CD4-positive, alpha-beta T cell (primary cell): ENCODE measurements at regions of chr4 and their contacts with region 1.

Region 1: GRCh38 chr4:6986781-6987587 is 56.2 kb upstream of the TADA2B start:
- DNase-seq: peak; percentile 88 to 98 (median 92)
- ATAC-seq: peak; percentile 90
- H3K4me3 ChIP-seq: peak overlapping the region; percentile 88
- H3K4me3 Mint-ChIP-seq: peak overlapping the region; percentile 97
- H3K27ac ChIP-seq: peak overlapping the region; percentile 78 to 93
- H3K27ac Mint-ChIP-seq: peak overlapping the region; percentile 95
- H3K4me1 ChIP-seq: peaks cover 64% of the 10 kb centered on the region
- H3K4me1 Mint-ChIP-seq: peaks cover 67% of the 10 kb centered on the region
- H3K27me3 ChIP-seq: no peaks in the 10 kb centered on the region
- H3K27me3 Mint-ChIP-seq: no peaks in the 10 kb centered on the region
- CTCF ChIP-seq: no peak

Region 2: GRCh38 chr4:6716018-6716911 is 270.7 kb before region 1 on chr4 and contains the start of gene BLOC1S4:
- CTCF ChIA-PET with region 1: no interaction called
- POLR2A ChIA-PET with region 1: interaction called, 6 read pairs
- intact Hi-C with region 1: loop called in 1 of 2 experiments (anchors 5 kb)
- DNase-seq: peak; percentile 79 to 98 (median 88)
- ATAC-seq: peak; percentile 79
- H3K4me3 ChIP-seq: peak within 1 kb of the TSS; percentile 95
- H3K4me3 Mint-ChIP-seq: peak within 1 kb of the TSS; percentile 99
- H3K27ac ChIP-seq: peak within 1 kb of the TSS; percentile 82 to 85
- H3K27ac Mint-ChIP-seq: peak within 1 kb of the TSS; percentile 99
- H3K4me1 ChIP-seq: peaks cover 31% of the 10 kb centered on the region
- H3K4me1 Mint-ChIP-seq: peaks cover 39% of the 10 kb centered on the region
- H3K27me3 ChIP-seq: no peaks in the 10 kb centered on the region
- H3K27me3 Mint-ChIP-seq: no peaks in the 10 kb centered on the region
- CTCF ChIP-seq: no peak
- total RNA-seq, gene BLOC1S4: 24.6 to 27.6 TPM

Region 3: DNA sequence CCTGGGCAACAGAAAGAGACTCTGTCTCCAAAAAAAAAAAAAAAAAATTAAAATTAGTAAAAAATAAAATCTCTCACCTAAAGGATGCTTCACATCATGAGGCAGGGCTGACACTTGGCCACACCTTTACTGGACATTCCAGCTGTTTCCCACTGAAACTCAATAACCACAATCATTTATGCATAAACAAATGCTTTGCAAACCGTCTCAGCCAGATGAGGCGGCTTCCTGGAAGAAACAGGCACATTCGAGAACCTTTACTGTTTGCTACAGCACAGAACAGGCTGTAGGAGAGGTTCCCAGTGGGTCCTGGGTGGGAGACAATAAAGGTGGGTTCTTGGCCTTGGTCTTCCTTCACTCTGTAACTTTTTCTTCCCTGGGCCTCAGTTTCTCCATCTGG is 88.2 kb before region 1 on chr4:
- CTCF ChIA-PET with region 1: no interaction called
- POLR2A ChIA-PET with region 1: interaction called, 10 read pairs
- intact Hi-C with region 1: no loop called
- DNase-seq: peak in 1 of 14 experiments; percentile 23
- ATAC-seq: peak; percentile 29
- H3K4me3 ChIP-seq: no peak overlapping the region
- H3K4me3 Mint-ChIP-seq: no peak overlapping the region
- H3K27ac ChIP-seq: peak overlapping the region in 1 of 2 donors; percentile 62
- H3K27ac Mint-ChIP-seq: peak overlapping the region; percentile 87
- H3K4me1 ChIP-seq: peaks cover 43% of the 10 kb centered on the region
- H3K4me1 Mint-ChIP-seq: peaks cover 28% of the 10 kb centered on the region
- H3K27me3 ChIP-seq: no peaks in the 10 kb centered on the region
- H3K27me3 Mint-ChIP-seq: no peaks in the 10 kb centered on the region
- CTCF ChIP-seq: no peak

Region 4: GRCh38 chr4:6917461-6918271 is 69.3 kb before region 1 on chr4:
- CTCF ChIA-PET with region 1: interaction called, 4 read pairs
- POLR2A ChIA-PET with region 1: interaction called, 78 read pairs
- intact Hi-C with region 1: loop called in 1 of 2 experiments (anchors 2 kb)
- DNase-seq: peak in 7 of 14 experiments; percentile 27 to 74 (median 48)
- ATAC-seq: peak; percentile 46
- H3K4me3 ChIP-seq: peak overlapping the region; percentile 37
- H3K4me3 Mint-ChIP-seq: peak overlapping the region; percentile 46
- H3K27ac ChIP-seq: peak overlapping the region; percentile 59 to 89
- H3K27ac Mint-ChIP-seq: peak overlapping the region; percentile 90
- H3K4me1 ChIP-seq: peaks cover 95% of the 10 kb centered on the region
- H3K4me1 Mint-ChIP-seq: peaks cover 76% of the 10 kb centered on the region
- H3K27me3 ChIP-seq: no peaks in the 10 kb centered on the region
- H3K27me3 Mint-ChIP-seq: no peaks in the 10 kb centered on the region
- CTCF ChIP-seq: peak; percentile 51

Region 5: GRCh38 chr4:6942238-6942800 is 44.7 kb before region 1 on chr4:
- CTCF ChIA-PET with region 1: interaction called, 3 read pairs
- POLR2A ChIA-PET with region 1: interaction called, 32 read pairs
- intact Hi-C with region 1: loop called (anchors 1 to 2 kb)
- DNase-seq: peak in 13 of 14 experiments; percentile 17 to 79 (median 36)
- ATAC-seq: peak; percentile 86
- H3K4me3 ChIP-seq: peak overlapping the region; percentile 40
- H3K4me3 Mint-ChIP-seq: peak overlapping the region; percentile 83
- H3K27ac ChIP-seq: peak overlapping the region; percentile 62 to 81
- H3K27ac Mint-ChIP-seq: peak overlapping the region; percentile 95
- H3K4me1 ChIP-seq: peaks cover 86% of the 10 kb centered on the region
- H3K4me1 Mint-ChIP-seq: peaks cover 73% of the 10 kb centered on the region
- H3K27me3 ChIP-seq: no peaks in the 10 kb centered on the region
- H3K27me3 Mint-ChIP-seq: no peaks in the 10 kb centered on the region
- CTCF ChIP-seq: no peak

Region 6: DNA sequence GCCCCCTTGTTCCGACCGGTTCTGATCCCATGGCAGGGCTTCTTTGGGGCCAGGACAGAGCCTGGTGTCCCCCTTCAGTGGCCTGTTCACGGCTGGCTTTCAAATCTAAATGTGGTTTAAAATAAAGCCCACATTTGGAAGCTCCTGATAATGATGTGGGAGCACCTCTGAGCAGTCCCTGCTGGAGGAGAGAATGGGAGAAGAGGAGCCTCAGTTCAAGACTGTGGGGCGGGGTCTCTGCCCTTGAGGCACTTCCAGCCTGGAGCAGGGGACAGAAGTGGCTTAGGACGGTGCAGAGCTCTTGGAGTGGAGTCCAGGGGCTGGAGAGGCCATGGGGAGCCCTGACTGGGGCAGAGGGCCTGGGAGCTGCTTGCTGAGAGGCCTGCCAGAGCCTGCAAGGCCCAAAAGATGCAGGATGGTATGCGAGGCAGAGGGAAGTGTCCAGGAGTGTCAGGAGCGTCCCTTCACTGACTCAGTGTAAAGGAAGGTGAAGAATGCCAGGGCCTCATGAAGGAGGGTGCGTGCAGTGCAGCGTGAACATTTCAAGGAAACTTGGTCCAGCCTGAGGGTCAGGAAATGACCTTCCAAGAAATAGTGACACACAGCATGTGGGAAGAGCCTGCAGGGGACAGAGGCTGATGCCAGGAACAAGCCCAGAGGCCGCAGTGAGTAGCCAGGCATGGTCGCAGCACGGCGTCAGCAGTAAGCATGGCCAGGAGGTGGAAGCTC is 35.1 kb after region 1 on chr4:
- CTCF ChIA-PET with region 1: no interaction called
- POLR2A ChIA-PET with region 1: no interaction called
- intact Hi-C with region 1: no loop called
- DNase-seq: no peak
- ATAC-seq: no peak
- H3K4me3 ChIP-seq: no peak overlapping the region
- H3K4me3 Mint-ChIP-seq: no peak overlapping the region
- H3K27ac ChIP-seq: no peak overlapping the region
- H3K27ac Mint-ChIP-seq: no peak overlapping the region
- H3K4me1 ChIP-seq: no peaks in the 10 kb centered on the region
- H3K4me1 Mint-ChIP-seq: no peaks in the 10 kb centered on the region
- H3K27me3 ChIP-seq: no peaks in the 10 kb centered on the region
- H3K27me3 Mint-ChIP-seq: no peaks in the 10 kb centered on the region
- CTCF ChIP-seq: no peak

Region 7: DNA sequence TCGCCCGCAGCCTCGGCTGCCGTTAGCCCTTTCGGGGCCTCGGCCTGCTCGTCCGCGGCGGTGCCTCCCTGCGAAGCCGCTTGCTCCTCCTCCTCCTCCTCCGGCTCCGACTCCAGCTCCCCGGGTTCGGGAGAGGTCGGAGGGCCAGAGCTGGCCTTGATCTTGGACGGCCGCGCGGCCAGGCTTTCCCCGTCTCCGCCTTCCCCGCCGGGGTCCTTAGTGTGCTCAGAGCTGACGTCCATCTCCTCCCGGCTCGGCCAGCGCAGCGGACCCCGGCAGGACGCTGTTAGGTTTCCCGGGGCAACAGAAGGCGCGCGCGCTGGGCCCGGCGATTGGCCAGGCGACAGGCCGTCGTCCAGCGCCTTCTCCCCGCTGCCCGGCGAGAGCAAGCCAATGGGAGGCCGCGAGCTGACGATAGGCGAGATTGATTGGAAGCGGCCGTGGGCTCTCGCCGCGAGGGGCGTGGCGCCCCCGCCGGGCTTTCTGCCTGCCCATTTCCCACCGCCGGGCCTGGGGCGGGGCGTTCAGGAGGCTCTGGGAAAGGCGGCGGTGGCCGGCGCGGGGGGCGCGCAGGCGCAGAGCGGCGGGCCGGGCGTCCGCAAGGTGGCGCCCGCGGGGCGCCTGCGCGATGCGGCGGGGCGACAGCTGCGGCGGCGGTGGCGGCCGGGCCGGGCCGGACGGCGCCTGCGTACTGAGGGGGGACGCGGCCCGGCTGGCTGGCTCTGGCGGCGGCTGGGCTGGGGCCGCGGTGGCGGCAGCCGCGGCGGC is 55.9 kb after region 1 on chr4 and contains the start of gene TADA2B:
- CTCF ChIA-PET with region 1: interaction called, 12 read pairs
- POLR2A ChIA-PET with region 1: interaction called, 13 read pairs
- intact Hi-C with region 1: loop called in 1 of 2 experiments (anchors 1 kb)
- DNase-seq: peak; percentile 72 to 97 (median 89)
- ATAC-seq: peak; percentile 76
- H3K4me3 ChIP-seq: peak within 1 kb of the TSS; percentile 87
- H3K4me3 Mint-ChIP-seq: peak within 1 kb of the TSS; percentile 93
- H3K27ac ChIP-seq: peak within 1 kb of the TSS; percentile 44 to 81
- H3K27ac Mint-ChIP-seq: peak within 1 kb of the TSS; percentile 82
- H3K4me1 ChIP-seq: peaks cover 55% of the 10 kb centered on the region
- H3K4me1 Mint-ChIP-seq: peaks cover 57% of the 10 kb centered on the region
- H3K27me3 ChIP-seq: no peaks in the 10 kb centered on the region
- H3K27me3 Mint-ChIP-seq: no peaks in the 10 kb centered on the region
- CTCF ChIP-seq: peak; percentile 22
- total RNA-seq, gene TADA2B: 41.5 to 44.6 TPM

Region 8: DNA sequence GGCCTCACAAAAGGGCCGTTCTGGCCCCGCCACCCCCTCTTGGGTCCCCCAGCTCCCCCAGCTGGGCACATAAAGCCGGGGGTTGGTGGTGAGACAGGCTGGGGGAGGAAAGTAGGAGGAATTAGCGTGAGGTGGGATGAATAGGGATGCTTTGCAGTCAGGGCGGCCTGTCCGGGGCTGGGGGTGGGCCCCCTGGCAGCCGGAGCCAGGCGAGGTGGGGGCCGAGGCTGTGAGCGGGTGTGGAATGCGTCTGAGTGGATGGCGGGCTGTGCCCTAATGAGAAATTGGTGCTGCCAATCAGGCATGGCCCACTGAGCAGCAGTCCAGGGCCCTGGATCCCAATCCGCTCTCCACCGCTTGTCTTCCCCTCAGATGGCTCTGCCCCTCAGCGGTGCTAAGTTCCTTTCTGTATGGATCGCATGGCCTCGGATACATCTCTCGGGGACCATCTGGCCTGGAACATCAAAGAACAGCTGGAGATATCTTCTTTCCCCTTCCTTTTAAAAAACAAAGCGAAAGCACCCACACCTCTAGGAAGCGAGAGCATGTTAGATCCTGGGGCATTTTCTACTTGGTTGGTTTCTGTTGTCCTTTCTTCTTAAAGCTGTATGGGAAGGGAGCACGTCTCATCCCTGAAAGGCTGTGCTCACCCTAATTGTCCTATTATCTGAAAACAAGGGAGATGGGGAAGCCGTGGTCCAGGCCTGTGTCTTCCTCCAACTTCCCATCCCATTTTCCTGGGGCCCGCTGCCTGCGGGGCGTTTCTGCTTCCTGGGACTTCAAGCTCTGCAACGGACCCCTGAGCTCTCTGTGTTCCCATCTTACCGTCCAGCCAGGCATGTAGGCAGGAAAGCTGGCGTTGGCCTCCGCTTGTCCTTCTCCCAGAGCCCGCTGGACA is 312.3 kb after region 1 on chr4:
- CTCF ChIA-PET with region 1: no interaction called
- POLR2A ChIA-PET with region 1: no interaction called
- intact Hi-C with region 1: no loop called
- DNase-seq: no peak
- ATAC-seq: no peak
- H3K4me3 ChIP-seq: no peak overlapping the region
- H3K4me3 Mint-ChIP-seq: no peak overlapping the region
- H3K27ac ChIP-seq: no peak overlapping the region
- H3K27ac Mint-ChIP-seq: no peak overlapping the region
- H3K4me1 ChIP-seq: no peaks in the 10 kb centered on the region
- H3K4me1 Mint-ChIP-seq: no peaks in the 10 kb centered on the region
- H3K27me3 ChIP-seq: peaks cover 0 to 2% of the 10 kb centered on the region in 2 experiments
- H3K27me3 Mint-ChIP-seq: peaks cover 31% of the 10 kb centered on the region
- CTCF ChIP-seq: no peak